WTC11 (cell line): ENCODE measurements at regions of chr11 and their contacts with region 1.

Region 1: DNA sequence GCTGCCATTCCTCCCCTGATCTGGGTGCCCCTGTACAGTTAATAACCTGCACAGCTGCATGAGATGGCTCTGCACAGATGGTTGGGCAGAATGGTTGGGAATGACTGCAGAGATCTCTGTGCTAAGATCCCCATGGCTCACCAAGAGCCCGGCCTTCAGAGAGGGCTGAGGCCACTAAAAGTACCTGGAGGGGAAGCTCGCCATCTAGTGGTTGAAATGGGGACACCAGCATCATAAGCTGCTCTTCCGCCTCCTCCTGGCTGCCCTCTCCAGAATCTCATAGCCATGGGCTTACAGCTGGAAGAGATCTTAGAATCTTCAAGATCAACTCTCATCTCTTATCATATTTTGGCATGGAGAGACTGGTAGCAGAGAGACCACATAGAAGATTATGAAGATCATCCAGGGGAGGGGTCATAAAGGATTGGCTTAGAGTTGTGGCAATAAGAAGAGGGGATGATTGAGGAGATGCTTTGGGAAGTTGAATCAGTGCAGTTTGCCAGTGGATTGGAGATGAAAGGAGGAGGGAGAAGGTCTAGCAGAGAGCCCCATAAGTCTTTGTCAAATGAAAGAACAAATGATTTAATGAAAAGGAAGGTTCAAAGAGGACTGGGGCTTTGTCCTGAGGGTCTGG is 22.0 kb upstream of the TLCD5 start:
- DNase-seq: peak; percentile 81
- ATAC-seq: peak; percentile 67
- H3K4me3 Mint-ChIP-seq: no peak overlapping the region
- H3K27ac Mint-ChIP-seq: no peak overlapping the region
- H3K4me1 Mint-ChIP-seq: peaks cover 23% of the 10 kb centered on the region
- H3K27me3 Mint-ChIP-seq: peaks cover 7% of the 10 kb centered on the region
- CTCF ChIP-seq: peak; percentile 79

Region 2: DNA sequence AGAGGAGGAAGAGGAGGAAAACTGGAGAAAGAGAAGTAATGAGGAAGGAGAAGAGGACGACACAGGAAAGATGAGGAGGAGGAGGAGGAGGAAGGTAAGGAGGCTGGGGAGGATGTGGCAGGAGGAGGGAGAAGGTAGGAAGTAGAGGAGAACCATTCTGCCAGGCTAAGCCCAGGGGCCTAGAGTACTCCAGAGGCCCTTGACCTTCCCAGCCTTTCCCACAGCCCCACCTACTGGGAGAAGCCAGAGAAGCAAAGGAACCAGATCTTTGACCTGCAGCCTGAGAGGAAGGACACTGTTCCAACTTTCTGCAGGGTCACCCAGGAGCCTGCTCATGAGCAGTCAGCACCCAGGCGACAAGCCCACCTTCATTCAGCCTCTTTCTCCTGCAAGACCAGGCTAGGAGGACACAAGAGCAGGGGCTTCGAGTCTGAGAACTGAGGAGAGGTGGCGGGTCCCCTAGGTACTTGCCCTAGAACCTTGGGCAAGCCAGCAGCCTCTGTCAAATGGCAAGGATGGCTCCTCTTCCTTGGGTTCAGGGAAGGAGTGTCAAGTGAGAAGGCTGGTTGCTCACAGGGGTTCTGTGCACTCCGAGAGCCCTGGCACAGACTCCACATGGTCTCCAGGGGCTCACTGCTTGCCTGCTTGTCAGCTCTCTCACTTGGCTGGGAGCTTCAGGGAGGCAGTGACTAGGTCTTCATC is 120.2 kb before region 1 on chr11:
- CTCF ChIA-PET with region 1: interaction called, 35 read pairs
- POLR2A ChIA-PET with region 1: no interaction called
- DNase-seq: peak; percentile 77
- ATAC-seq: peak; percentile 82
- H3K4me3 Mint-ChIP-seq: no peak overlapping the region
- H3K27ac Mint-ChIP-seq: no peak overlapping the region
- H3K4me1 Mint-ChIP-seq: peaks cover 30% of the 10 kb centered on the region
- H3K27me3 Mint-ChIP-seq: peaks cover 65% of the 10 kb centered on the region
- CTCF ChIP-seq: no peak

Region 3: DNA sequence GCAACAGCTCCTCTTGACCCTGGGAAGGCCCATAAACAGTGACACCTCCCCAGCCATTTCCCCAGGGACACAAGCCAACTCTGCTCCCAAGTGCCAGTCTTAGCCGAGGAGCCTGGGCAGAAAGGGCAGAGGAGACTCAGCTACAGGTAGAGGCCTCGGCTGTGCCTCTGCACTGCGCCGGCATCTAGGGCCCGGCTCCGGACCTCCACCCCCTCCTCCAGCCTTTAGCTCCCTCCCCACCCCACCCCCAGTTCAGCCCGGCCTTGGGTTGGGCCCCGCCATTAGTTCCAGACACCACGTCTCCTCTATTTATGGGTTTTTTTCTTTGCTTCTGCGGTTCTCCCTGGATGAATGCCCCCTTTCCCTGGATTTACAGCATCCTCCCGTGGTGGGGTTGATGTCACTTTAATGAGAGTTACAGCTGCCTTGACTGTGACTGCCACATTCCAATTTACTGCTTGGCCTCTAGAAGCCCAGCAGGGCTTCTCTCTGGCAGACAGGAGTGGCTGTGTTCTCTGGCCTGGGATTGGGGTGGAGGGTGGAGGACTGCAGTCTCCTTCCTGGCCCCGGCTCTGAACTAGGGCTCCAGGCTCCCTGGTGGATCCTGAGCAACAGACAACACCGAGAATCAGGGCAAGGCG is 105.8 kb before region 1 on chr11:
- CTCF ChIA-PET with region 1: interaction called, 15 read pairs
- POLR2A ChIA-PET with region 1: no interaction called
- DNase-seq: no peak
- ATAC-seq: peak; percentile 70
- H3K4me3 Mint-ChIP-seq: no peak overlapping the region; the same call in 1 of the 2 replicates
- H3K27ac Mint-ChIP-seq: no peak overlapping the region
- H3K4me1 Mint-ChIP-seq: peaks cover 47% of the 10 kb centered on the region
- H3K27me3 Mint-ChIP-seq: peaks cover 79% of the 10 kb centered on the region
- CTCF ChIP-seq: no peak

Region 4: DNA sequence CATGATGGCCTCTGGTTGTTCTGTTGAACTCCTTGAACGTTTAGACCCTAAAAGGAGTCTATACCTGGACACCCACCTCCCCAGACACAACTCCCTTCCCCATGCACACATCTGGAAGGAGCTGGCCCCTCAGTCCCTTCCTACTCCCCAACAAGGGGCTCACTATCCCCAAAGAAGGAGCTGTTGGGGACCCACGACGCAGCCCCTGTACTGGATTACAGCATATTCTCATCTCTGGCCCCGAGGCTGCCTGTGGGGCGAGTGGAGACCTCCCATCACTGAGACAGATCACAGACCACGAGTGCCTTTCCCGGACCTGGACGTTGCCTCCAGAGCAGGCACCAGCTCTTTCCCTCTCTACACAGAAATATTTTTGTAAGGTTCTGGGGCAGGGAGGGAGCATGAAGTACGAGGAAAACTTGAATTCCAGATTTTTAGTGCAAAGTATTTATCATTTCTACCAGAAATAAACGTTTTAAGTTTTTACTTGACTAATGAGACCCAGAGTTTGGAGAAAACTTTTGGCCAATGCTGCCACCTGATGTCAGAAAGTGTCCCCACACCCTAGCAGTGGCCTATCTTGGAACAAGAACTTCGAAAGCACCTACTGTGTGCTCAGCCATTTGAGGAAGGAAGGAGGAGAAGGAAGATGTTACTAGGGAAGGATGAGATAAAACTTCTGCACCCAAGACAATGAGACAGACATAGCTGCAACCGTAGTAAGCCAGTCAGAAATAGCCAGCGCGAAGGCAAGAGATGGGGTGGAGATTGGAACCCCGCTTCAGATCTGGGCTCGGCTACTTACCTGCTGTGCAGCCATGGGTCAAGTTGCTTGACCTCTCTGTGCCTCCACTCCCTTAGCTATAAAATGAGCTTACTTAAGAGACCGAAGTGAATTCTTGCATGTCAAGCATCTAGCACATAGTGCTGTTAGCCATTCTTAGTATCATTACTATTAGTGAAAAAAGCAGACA is 73.4 kb before region 1 on chr11:
- CTCF ChIA-PET with region 1: interaction called, 623 read pairs
- POLR2A ChIA-PET with region 1: no interaction called
- DNase-seq: peak; percentile 57
- ATAC-seq: peak; percentile 49
- H3K4me3 Mint-ChIP-seq: no peak overlapping the region
- H3K27ac Mint-ChIP-seq: no peak overlapping the region
- H3K4me1 Mint-ChIP-seq: peaks cover 14% of the 10 kb centered on the region
- H3K27me3 Mint-ChIP-seq: peaks cover 2% of the 10 kb centered on the region; the same call in 1 of the 2 replicates
- CTCF ChIP-seq: peak; percentile 41

Region 5: GRCh38 chr11:120258661-120259060 is 44.5 kb before region 1 on chr11:
- CTCF ChIA-PET with region 1: interaction called, 623 read pairs
- POLR2A ChIA-PET with region 1: no interaction called
- DNase-seq: no peak
- ATAC-seq: peak; percentile 15; the same call in 1 of the 2 replicates
- H3K4me3 Mint-ChIP-seq: no peak overlapping the region
- H3K27ac Mint-ChIP-seq: no peak overlapping the region
- H3K4me1 Mint-ChIP-seq: peaks cover 58% of the 10 kb centered on the region
- H3K27me3 Mint-ChIP-seq: peaks cover 59% of the 10 kb centered on the region
- CTCF ChIP-seq: no peak

Region 6: DNA sequence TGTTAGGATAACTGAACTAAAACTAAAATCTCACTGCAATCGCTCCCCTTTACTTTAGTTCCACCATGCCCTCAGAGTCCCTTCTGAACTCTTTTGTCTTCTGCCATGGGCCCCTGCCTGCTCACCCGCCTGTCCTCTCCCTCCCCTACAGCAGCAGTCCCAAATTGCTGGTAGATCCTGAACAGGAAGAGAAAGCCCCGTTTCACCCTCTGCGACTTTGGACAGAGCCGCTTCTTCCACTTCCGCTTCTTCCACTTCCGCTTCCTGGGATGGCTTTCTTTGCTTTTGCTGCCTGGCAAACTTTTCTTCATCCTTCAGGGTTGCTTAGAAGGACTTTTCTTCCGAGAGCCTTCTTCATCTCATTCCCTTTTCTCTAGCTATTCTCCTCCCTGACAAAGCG is 13.7 kb before region 1 on chr11:
- CTCF ChIA-PET with region 1: interaction called, 29 read pairs
- POLR2A ChIA-PET with region 1: no interaction called
- DNase-seq: no peak
- ATAC-seq: no peak
- H3K4me3 Mint-ChIP-seq: no peak overlapping the region
- H3K27ac Mint-ChIP-seq: no peak overlapping the region
- H3K4me1 Mint-ChIP-seq: peaks cover 8% of the 10 kb centered on the region
- H3K27me3 Mint-ChIP-seq: peaks cover 6% of the 10 kb centered on the region; the same call in 1 of the 2 replicates
- CTCF ChIP-seq: no peak

Region 7: GRCh38 chr11:120335908-120336640 is 33.0 kb after region 1 on chr11 and contains the start of gene ARHGEF12:
- CTCF ChIA-PET with region 1: interaction called, 10 read pairs
- POLR2A ChIA-PET with region 1: no interaction called
- DNase-seq: peak; percentile 95
- ATAC-seq: peak; percentile 63
- H3K4me3 Mint-ChIP-seq: peak within 1 kb of the TSS; percentile 99
- H3K27ac Mint-ChIP-seq: peak within 1 kb of the TSS; percentile 89
- H3K4me1 Mint-ChIP-seq: peaks cover 30% of the 10 kb centered on the region
- H3K27me3 Mint-ChIP-seq: no peaks in the 10 kb centered on the region
- CTCF ChIP-seq: no peak
- total RNA-seq, gene ARHGEF12: 32.0 to 35.8 TPM (median 32.2 TPM) in 3 replicates